Dorsolateral prefrontal cortex (tissue), 120 donors: ENCODE measurements at regions of chr1 and their contacts with region 1.

Region 1: DNA sequence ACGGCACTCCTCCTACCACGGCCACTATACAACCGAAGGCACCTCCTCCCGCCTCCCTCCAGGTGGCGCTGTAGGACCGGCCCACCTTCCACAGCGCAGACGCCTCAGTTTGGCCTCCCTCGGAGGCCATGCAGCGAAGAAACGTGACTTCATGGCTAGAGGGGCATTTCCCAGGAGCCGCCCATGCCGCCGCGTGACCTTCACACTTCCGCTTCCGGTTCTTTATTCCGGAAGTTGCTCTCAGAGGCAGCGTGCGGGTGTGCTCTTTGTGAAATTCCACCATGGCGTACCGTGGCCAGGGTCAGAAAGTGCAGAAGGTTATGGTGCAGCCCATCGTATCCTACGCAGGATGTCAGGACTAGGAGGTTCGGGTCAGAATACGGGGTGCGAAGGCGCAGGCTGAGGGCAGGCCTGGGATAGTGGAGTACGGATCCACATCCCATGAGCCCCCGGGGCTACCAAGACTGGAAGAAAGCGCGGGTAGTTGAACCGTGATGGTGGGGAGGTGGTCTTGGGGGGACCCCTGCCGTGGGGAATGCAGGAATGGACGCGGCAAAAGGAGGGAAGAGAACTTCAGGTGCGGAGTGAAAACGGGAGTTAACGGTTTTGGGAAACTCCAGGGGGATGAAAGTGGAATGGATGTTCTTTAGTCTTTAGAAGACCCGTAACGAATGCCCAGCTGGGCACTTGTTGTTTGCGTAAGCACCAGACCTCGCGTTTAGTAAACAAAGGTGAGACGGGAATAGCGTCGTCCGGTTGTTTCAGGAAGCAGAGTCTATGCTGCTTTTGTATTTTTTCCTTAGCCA is at the start of gene SNRPE:
- DNase-seq: peak; percentile 91 to 96 (median 94)
- H3K4me3 ChIP-seq: peak within 1 kb of the TSS; percentile 66 to 100 (median 90)
- H3K27ac ChIP-seq: peak within 1 kb of the TSS in 45 of 59 donors; percentile 9 to 87 (median 61)
- H3K27me3 ChIP-seq: no peaks in the 10 kb centered on the region
- CTCF ChIP-seq: peak; percentile 88 to 99 (median 97)
- total RNA-seq, gene SNRPE: 20.4 to 71.0 (median 43.4) TPM

Region 2: GRCh38 chr1:203795441-203796235 is 65.9 kb before region 1 on chr1 and contains the starts of genes ZBED6 and ZC3H11A:
- intact Hi-C with region 1: loop called (anchors 2 to 10 kb)
- DNase-seq: peak; percentile 98 to 100 (median 99)
- H3K4me3 ChIP-seq: peak within 1 kb of the TSS; percentile 55 to 97 (median 80)
- H3K27ac ChIP-seq: peak within 1 kb of the TSS; percentile 72 to 99 (median 96)
- H3K27me3 ChIP-seq: no peaks in the 10 kb centered on the region
- CTCF ChIP-seq: peak in 27 of 56 donors; percentile 3 to 52 (median 18)
- total RNA-seq, gene ZBED6: 16.5 to 57.6 (median 29.2) TPM
- total RNA-seq, gene ZC3H11A: 51.9 to 91.9 (median 71.8) TPM

Region 3: DNA sequence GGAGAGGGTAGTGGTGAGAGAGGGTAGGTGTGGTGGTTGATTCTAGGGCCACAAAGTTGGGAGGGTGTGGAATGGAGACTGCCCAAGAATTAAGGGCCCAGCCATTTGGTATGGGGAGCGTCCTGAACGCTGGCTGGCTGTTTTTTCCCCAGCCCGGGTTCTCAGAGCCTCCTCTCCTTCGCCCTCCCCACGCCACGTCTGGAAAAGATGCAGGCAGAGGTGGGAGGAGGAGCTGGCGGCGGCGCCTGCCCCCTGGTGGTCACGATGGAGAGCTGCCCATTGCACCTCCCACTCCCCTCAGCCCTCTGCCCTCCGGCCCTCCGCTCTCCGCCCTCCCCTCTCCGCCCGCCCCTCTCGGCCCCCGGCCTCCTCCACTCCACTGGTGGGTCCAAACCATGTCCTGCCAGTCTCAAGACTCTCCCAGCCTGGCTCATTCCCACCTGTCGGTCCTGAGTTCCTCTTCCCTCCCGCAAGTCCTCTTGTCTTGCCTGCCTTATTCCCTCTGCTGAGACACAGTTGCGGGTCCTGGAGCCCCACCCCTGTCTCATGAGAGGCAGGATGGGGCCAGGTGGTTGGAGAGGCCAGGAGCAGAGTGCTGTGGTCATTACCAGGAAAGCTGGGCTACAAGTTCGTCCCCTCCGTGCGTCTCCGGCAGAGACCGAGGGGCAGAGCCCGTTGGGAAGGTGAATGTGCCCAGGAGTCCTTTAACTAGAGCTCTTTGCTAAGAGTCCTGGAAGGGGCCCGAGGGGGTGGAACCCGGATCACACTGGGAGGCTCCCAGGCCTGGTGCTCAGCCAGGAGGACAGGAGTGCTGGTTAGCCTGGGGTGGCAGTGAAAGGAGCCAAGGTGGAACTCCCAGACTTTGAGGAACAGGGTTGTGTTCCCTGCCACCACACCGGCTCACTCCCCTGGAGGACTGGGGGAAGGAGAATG is 267.6 kb after region 1 on chr1:
- intact Hi-C with region 1: loop called in 1 of 2 experiments (anchors 1 kb)
- DNase-seq: peak in 9 of 10 donors; percentile 43 to 80 (median 58)
- H3K4me3 ChIP-seq: peak overlapping the region in 16 of 59 donors; percentile 8 to 35 (median 20)
- H3K27ac ChIP-seq: peak overlapping the region in 9 of 59 donors; percentile 0 to 65 (median 23)
- H3K27me3 ChIP-seq: no peaks in the 10 kb centered on the region
- CTCF ChIP-seq: peak; percentile 62 to 98 (median 93)

Region 4: GRCh38 chr1:204207136-204207616 is 345.6 kb after region 1 on chr1:
- intact Hi-C with region 1: loop called in 1 of 2 experiments (anchors 2 kb)
- DNase-seq: peak in 9 of 10 donors; percentile 60 to 80 (median 66)
- H3K4me3 ChIP-seq: peak overlapping the region in 6 of 59 donors; percentile 8 to 32 (median 14)
- H3K27ac ChIP-seq: peak overlapping the region in 20 of 59 donors; percentile 0 to 68 (median 30)
- H3K27me3 ChIP-seq: peaks cover 0 to 7% (median 0%) of the 10 kb centered on the region in 45 donors
- CTCF ChIP-seq: peak; percentile 61 to 94 (median 87)

Region 5: DNA sequence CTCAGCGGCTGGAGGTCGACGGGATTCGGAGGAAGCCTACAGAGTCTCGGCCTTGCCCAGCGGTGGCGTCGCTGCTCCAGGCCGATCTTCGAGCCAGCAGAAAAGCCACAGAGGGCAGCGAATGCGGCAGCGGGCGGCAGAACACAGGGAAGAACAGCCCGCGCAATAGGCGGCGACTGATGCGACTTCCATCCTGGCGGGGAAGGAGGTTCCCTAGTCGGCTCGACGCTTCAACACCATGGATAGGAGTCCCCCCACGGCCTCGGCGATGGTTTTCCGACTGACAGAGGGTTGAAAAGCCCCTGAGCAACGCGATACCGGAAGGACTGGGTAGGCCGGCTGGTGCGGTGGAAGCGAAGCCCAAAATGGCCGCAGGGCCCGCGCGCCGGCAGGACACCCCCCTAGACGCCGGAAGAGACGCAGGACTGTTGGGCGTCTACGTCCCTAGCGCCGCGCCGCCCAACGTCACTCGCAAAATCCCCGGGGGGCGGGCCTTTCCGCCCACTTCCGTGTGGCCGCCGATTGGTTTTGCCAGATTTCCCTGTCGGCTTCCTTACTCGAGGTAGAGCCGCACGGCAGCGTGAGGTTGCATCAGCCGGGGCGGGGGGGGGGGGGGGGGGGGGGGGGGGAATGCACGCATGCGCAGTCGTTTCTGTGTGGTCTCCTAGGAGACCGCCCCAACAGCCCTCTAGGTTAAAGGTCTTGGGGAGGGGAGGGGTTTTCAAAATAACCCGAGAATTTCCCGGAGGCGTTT is 550.0 kb after region 1 on chr1 and contains the start of gene PPP1R15B:
- intact Hi-C with region 1: loop called in 1 of 2 experiments (anchors 10 kb)
- DNase-seq: peak; percentile 92 to 98 (median 96)
- H3K4me3 ChIP-seq: peak within 1 kb of the TSS; percentile 57 to 99 (median 90)
- H3K27ac ChIP-seq: peak within 1 kb of the TSS; percentile 84 to 100 (median 97)
- H3K27me3 ChIP-seq: no peaks in the 10 kb centered on the region
- CTCF ChIP-seq: peak in 25 of 56 donors; percentile 3 to 48 (median 19)
- total RNA-seq, gene PPP1R15B: 26.2 to 55.9 (median 35.6) TPM

Region 6: GRCh38 chr1:204494281-204495077 is 632.9 kb after region 1 on chr1 and contains the start of gene PIK3C2B:
- intact Hi-C with region 1: loop called in 1 of 2 experiments (anchors 10 kb)
- DNase-seq: peak; percentile 67 to 89 (median 84)
- H3K4me3 ChIP-seq: peak within 1 kb of the TSS; percentile 67 to 99 (median 91)
- H3K27ac ChIP-seq: peak within 1 kb of the TSS; percentile 84 to 99 (median 97)
- H3K27me3 ChIP-seq: no peaks in the 10 kb centered on the region
- CTCF ChIP-seq: peak; percentile 2 to 68 (median 49)
- total RNA-seq, gene PIK3C2B: 38.4 to 188 (median 62.6) TPM

Region 7: GRCh38 chr1:204516180-204516879 is 654.7 kb after region 1 on chr1 and contains the start of gene MDM4:
- intact Hi-C with region 1: loop called (anchors 5 kb)
- DNase-seq: peak; percentile 70 to 93 (median 90)
- H3K4me3 ChIP-seq: peak within 1 kb of the TSS; percentile 55 to 97 (median 85)
- H3K27ac ChIP-seq: peak within 1 kb of the TSS; percentile 82 to 98 (median 94)
- H3K27me3 ChIP-seq: no peaks in the 10 kb centered on the region
- CTCF ChIP-seq: peak in 36 of 56 donors; percentile 7 to 51 (median 27)
- total RNA-seq, gene MDM4: 56.3 to 151 (median 97.1) TPM